ENCODE measurements at regions of chr21 and their contacts with region 1.

Region 1: GRCh38 chr21:45140346-45140940 is 66.1 kb downstream of the ADARB1 start:
- DNase-seq: peak; percentile 86
- CTCF ChIP-seq: peak; percentile 87

Region 2: DNA sequence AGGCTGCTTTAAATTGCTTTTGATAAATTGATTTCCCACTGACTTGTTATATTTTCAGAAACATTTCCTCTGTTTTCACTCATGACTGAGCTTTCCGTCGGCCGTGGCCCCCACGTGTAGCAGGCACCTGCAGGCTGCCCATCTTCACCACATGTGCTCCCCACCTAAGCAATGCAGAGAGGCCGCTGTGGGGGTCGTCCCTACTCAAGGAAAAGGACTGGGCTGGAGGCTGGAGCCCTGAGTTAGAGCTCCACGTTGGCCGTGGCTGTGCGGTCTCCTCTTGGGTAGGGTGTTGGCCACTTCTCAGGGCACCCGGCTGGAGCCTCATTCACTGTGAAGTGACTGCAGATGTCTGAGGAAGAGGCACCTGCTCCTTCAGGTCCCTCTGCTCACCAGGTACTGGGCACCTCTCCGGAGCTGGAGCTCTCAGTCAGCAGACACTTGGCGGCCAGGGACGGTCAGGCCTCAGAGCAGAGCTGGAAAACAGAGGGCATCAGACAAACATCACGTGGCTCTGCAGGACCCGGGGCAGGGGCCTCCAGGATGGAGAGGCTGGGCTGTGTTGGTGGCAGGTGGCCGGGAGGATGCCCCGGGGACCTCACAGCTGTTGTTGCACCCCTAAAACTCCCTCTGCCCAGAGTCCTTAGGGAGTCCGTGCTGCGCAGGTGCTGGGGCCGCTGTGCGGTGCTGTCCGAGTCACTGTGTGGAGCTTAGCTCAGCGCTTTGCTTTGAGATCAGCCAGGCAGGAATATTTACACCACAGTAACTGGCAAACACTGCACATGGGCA is 141.1 kb before region 1 on chr21:
- CTCF ChIA-PET with region 1: no interaction called
- POLR2A ChIA-PET with region 1: no interaction called
- DNase-seq: no peak
- CTCF ChIP-seq: no peak

Region 3: DNA sequence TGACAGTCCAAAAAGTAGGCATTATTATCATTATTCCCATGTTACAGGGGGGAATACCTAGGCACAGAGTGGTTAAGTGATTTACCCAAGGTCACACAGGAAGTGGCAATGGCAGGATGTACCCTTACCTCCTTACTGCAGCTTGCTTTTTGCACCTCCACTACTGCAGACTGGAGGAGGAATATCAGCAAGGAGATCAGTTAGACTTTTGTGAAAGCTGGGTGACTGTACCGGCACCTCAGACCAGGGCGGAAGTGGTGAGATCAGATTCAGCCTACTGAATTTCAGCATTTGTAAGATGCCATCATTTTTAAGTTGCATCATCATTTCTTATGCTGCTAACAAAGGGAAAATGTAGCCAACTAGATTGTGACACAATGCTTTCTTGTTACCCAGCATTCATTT is 61.6 kb before region 1 on chr21:
- CTCF ChIA-PET with region 1: interaction called, 19 read pairs
- POLR2A ChIA-PET with region 1: no interaction called
- DNase-seq: no peak
- CTCF ChIP-seq: no peak

Region 4: GRCh38 chr21:45109831-45110492 is 30.5 kb before region 1 on chr21:
- CTCF ChIA-PET with region 1: interaction called, 131 read pairs
- POLR2A ChIA-PET with region 1: no interaction called
- DNase-seq: peak; percentile 82
- CTCF ChIP-seq: no peak

Region 5: GRCh38 chr21:45161038-45161945 is 20.8 kb after region 1 on chr21:
- CTCF ChIA-PET with region 1: interaction called, 10 read pairs
- POLR2A ChIA-PET with region 1: no interaction called
- DNase-seq: no peak
- CTCF ChIP-seq: no peak

Region 6: DNA sequence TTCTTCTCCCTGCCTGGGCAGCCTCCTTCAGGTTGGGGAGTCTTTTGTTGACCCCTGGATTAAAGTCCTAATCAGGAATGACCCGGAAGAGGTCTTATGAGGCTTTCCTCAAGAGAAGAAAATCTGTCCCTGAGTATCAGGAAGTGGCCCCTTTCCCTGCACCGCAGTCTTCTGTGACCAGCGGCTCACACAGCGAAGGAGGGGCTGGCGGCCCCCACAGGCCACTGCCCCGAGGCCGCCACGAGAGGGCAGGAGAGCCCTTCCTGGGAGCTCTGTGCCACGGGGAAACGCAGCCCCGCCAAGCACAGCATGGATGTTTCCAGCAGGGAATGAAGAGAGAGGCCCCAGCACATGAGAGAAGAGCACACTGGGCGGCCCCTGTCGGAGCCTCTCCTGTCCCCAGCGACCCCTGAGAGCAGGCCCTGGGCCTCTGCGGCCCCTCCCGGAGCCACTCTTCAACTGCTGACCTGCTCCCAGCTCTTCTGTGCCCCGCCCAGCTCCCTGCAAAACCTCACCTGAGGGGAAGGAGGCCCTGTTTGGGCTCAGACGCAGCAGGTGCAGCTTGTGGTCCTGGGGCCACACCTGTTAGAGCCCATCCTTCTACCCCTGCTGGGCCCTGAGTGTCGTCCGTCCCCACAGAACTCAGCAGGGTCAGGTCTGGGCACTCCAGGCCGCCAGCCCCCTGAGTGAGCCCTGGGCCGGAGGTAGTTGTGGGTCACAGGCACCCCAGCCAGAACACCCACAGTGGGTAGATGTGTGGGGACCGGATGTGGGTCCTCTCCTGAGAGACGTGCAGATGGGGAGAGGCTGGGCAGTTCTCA is 152.2 kb after region 1 on chr21:
- CTCF ChIA-PET with region 1: interaction called, 14 read pairs
- POLR2A ChIA-PET with region 1: no interaction called
- DNase-seq: peak; percentile 84
- CTCF ChIP-seq: peak; percentile 93

Region 7: GRCh38 chr21:45880097-45881068 is 739.9 kb after region 1 on chr21:
- CTCF ChIA-PET with region 1: interaction called, 10 read pairs
- POLR2A ChIA-PET with region 1: no interaction called
- DNase-seq: peak; percentile 74
- CTCF ChIP-seq: peak; percentile 53

Measured in GM10248 (cell line).